ENCODE measurements at regions of chr15 and their contacts with region 1.

Region 1: DNA sequence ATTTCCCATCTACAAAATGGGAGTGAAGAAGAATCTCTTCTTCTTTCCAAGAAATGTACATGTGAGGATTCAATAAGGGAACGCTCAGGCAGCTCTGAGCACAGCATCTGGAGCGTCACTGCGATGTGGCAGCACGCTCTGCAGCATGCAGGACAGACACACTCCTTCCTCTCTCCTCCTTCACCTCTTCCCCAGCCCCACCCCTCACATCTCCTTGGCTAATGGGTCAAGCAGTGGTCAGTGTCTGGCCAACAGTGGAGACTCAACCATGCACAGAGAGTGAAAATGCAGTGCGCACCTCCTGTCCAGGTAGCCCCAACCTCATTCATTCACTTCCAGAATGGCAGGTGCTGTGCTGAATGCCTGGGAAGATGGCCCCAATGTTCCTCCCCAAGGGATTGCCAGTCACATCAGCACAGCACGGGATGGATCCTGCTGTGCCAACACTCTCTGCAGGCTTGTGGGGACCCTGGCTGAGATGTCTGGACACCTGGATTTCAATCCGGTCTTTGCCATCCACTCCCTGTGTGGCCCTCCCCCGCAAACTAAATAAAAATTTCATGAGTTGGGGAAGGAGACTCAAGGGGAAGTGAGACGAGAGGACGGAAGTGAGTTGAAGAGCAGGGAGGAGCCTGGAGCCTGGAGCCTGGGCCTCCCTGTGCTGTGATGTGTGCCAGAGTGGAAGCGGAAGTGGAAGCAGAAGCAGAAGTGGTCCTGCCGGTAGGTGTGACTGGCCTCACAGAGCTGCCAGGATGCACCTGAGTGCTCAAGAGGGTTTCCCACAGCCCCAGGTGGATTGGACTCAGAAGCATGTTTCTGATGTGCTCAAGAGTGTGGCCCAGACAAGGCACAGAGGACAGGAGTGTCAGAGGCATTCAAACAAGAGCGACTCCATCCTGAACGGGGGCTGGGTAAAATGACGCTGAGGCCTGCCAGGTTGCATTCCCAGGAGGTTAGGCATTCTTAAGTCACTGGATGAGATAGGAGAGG is 163.9 kb downstream of the SMAD6 start:
- DNase-seq: peak; percentile 93
- H3K4me3 ChIP-seq: peak overlapping the region; percentile 28
- H3K27ac ChIP-seq: peak overlapping the region; percentile 51
- H3K4me1 ChIP-seq: peaks cover 26% of the 10 kb centered on the region
- CTCF ChIP-seq: no peak

Region 2: GRCh38 chr15:66816201-66816600 is 49.7 kb before region 1 on chr15:
- CTCF ChIA-PET with region 1: no interaction called
- POLR2A ChIA-PET with region 1: no interaction called
- intact Hi-C with region 1: no loop called
- DNase-seq: no peak
- H3K4me3 ChIP-seq: no peak overlapping the region
- H3K27ac ChIP-seq: no peak overlapping the region
- H3K4me1 ChIP-seq: no peaks in the 10 kb centered on the region
- CTCF ChIP-seq: no peak

Region 3: DNA sequence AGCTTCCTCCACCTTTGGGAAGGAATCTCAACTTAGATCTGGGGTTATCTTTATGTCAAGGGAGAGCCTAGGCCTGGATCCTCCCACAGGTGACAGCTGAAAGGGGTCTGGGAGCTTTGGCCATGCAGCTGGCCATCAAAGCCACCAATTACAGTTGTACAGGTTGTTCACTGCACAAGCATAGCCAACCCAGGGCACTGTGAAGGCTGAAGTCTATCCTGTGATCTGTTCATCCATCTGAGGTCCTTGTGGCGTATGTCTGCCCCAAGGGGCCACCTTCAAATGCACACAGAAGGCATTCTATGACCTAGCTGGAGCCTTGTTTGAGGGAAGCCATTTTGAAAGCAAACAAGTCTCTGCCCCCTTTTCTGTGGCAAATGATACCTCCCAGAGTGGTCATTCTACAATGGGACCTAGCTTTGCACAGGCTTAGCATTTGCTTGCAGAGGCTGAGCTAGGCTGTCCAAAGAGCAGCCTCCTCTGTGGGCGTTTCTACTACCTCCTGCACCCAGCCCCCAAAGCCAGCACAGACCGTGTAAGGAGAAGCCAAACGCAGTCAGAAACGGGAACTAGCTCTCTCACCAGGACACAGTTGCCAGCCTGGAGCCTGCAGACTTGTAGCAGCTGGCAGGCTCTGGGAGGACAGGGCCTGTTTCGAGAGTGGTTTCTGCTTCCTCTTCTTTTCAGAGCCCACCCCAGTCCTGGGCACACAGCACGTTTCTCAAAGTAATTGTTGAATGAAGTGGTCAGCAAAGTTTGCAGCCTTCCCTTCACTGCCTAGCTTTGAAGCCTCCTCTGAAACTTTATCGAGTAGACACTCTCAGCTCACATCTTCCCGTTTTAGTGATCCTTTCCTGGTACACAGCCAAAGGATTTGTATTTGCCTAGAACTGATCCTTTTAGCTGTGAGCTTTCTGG is 42.2 kb after region 1 on chr15:
- CTCF ChIA-PET with region 1: no interaction called
- POLR2A ChIA-PET with region 1: interaction called, 3 read pairs
- intact Hi-C with region 1: loop called (anchors 1 kb)
- DNase-seq: peak; percentile 72
- H3K4me3 ChIP-seq: no peak overlapping the region
- H3K27ac ChIP-seq: no peak overlapping the region
- H3K4me1 ChIP-seq: peaks cover 29% of the 10 kb centered on the region
- CTCF ChIP-seq: no peak

Region 4: DNA sequence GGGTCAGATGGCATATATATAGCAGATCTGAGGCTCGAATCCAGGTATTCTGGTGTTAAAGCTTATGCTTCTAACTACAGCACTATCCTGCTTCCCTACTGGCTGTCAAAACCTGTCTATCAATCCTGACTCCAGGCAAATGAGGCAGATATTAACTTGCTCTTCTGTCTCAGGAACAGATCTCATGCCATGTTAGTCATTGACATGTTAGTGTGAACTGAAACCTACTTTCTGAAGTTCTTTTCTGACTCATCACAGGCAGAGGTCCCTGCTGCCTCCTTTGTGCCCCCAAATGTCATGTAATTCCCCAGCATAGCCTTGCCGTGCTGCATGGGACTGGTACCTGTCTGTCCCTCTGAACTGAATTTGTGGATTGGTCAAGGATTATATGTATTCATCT is 74.5 kb after region 1 on chr15:
- CTCF ChIA-PET with region 1: no interaction called
- POLR2A ChIA-PET with region 1: no interaction called
- intact Hi-C with region 1: loop called (anchors 5 kb)
- DNase-seq: no peak
- H3K4me3 ChIP-seq: no peak overlapping the region
- H3K27ac ChIP-seq: no peak overlapping the region
- H3K4me1 ChIP-seq: peaks cover 35% of the 10 kb centered on the region
- CTCF ChIP-seq: no peak

Region 5: GRCh38 chr15:67120839-67121643 is 255.1 kb after region 1 on chr15:
- CTCF ChIA-PET with region 1: no interaction called
- POLR2A ChIA-PET with region 1: no interaction called
- intact Hi-C with region 1: no loop called
- DNase-seq: no peak
- H3K4me3 ChIP-seq: peak overlapping the region; percentile 26
- H3K27ac ChIP-seq: peak overlapping the region; percentile 35
- H3K4me1 ChIP-seq: peaks cover 64% of the 10 kb centered on the region
- CTCF ChIP-seq: no peak